ENCODE measurements at regions of chr17 and their contacts with region 1.

Region 1: DNA sequence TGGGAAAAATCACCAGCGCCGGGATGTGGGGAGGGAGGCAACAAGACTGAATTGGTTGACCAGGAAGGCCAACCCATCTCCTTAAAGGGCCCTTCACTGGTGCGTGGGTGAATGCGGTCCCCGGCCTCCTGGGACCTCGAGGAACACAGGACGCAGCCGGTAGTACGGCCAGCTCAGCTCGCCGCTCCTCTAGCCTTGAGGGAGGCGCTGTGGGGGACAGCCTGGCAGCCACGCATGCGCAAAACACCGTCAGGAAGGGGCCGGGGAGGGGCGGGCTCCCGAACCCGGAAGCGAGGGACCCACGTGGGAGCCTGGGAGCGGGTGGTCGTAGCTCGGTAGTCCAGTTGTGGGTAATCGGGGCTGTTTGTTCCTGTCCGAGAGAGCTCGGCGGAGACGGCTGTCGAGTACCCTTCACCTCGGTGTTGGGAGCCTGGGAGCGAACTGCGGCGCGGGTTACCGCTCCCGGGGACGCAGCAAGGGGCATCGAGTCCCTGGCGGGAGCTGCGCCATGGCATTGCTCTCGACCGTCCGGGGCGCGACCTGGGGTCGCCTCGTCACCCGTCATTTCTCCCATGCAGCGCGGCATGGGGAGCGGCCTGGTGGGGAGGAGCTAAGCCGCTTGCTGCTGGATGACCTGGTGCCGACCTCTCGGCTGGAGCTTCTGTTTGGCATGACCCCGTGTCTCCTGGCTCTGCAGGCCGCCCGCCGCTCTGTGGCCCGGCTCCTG is at the start of gene MRM1:
- DNase-seq: peak; percentile 96
- CTCF ChIP-seq: peak; percentile 18

Region 2: DNA sequence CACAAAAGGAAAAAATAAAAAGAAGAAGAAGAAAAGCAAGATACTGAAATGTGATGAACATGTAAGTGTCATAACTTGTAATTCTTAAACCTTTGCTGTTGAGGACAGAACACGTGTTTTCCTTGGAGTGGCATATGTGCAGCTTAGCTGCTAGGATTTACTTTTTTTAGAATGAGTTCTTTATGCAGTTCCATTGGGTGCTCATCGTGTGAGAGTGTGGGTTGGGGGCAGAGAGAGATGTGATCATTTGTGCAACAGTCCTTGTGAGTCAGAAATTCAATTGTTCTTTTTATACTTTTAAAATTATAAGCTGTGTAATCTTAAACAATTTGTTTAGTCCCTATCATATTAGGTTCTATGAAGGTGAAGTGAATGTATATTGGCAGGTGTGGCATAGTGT is 15.3 kb before region 1 on chr17:
- CTCF ChIA-PET with region 1: interaction called, 43 read pairs
- POLR2A ChIA-PET with region 1: no interaction called
- DNase-seq: no peak
- CTCF ChIP-seq: no peak

Region 3: GRCh38 chr17:36629252-36629847 is 27.9 kb after region 1 on chr17:
- CTCF ChIA-PET with region 1: interaction called, 28 read pairs
- POLR2A ChIA-PET with region 1: no interaction called
- DNase-seq: peak; percentile 87
- CTCF ChIP-seq: peak; percentile 99

Region 4: GRCh38 chr17:37221865-37222264 is 620.4 kb after region 1 on chr17:
- CTCF ChIA-PET with region 1: interaction called, 10 read pairs
- POLR2A ChIA-PET with region 1: no interaction called
- DNase-seq: no peak
- CTCF ChIP-seq: no peak

Region 5: GRCh38 chr17:37373530-37374159 is 772.2 kb after region 1 on chr17:
- CTCF ChIA-PET with region 1: interaction called, 48 read pairs
- POLR2A ChIA-PET with region 1: no interaction called
- DNase-seq: peak; percentile 83
- CTCF ChIP-seq: peak; percentile 99